PC-3 (cell line): ENCODE measurements at regions of chr1 and their contacts with region 1.

Region 1: GRCh38 chr1:149899460-149900293 is at the start of gene BOLA1:
- DNase-seq: peak; percentile 94
- ATAC-seq: peak; percentile 98
- H3K4me3 ChIP-seq: peak within 1 kb of the TSS; percentile 68
- H3K27ac ChIP-seq: peak within 1 kb of the TSS; percentile 15; the same call in 1 of the 2 replicates
- H3K4me1 ChIP-seq: peaks cover 7% of the 10 kb centered on the region; the same call in 1 of the 2 replicates
- H3K27me3 ChIP-seq: no peaks in the 10 kb centered on the region
- CTCF ChIP-seq: no peak
- total RNA-seq, gene BOLA1: 27.6 and 38.6 TPM in 2 replicates

Region 2: DNA sequence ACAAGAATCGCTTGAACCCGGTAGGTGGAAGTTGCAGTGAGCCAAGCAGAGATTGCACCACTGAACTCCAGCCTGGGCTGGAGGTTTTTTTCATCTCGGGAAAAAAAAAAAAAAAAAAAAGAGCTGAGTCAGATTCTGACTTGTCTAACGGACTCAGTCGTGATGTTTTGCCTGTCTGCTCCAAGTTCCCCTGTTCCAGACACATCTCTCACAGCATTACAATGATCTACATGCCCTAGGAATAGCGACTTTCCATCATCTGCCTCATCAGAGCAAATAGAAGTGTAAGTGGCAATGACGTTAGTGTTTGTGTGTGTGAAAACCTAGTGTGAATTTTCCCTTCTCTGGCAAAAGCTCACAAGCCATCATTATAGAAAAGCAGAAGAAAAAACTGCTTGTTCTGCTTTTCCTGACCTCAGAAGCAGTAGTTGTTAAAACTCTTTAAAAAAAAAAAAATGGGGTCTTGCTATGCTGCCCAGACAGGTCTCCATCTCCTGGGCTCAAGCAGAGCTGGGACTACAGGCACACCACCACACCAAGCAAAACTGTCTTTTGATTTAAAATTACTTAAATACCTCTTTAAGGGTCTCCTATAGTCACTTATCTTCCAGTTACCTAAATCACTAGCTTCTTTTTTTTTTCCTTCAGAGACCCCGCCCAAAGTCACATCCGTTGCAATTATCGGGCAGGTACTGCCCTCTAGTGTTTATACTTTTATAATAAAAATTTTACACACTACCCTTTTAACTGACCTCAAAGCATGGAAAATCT is 287.3 kb after region 1 on chr1:
- CTCF ChIA-PET with region 1: no interaction called
- POLR2A ChIA-PET with region 1: interaction called, 7 read pairs
- intact Hi-C with region 1: loop called (anchors 10 kb)
- DNase-seq: peak; percentile 76
- ATAC-seq: peak; percentile 12
- H3K4me3 ChIP-seq: no peak overlapping the region
- H3K27ac ChIP-seq: peak overlapping the region; percentile 54
- H3K4me1 ChIP-seq: peaks cover 18% of the 10 kb centered on the region
- H3K27me3 ChIP-seq: no peaks in the 10 kb centered on the region
- CTCF ChIP-seq: peak; percentile 83